Activated CD4-positive, alpha-beta T cell treated with anti-CD3 and anti-CD28 coated beads, Interleukin-2, amount 10 ng/mL, durations not matched to agents 7 days and 5 days (primary cell): ENCODE measurements at regions of chr12 and their contacts with region 1.

Region 1: GRCh38 chr12:56346703-56347102 is 8.0 kb downstream of the IL23A start:
- DNase-seq: no peak
- H3K4me3 Mint-ChIP-seq: no peak overlapping the region
- H3K27ac Mint-ChIP-seq: no peak overlapping the region
- H3K4me1 Mint-ChIP-seq: peaks cover 5% of the 10 kb centered on the region
- H3K27me3 Mint-ChIP-seq: no peaks in the 10 kb centered on the region

Region 2: GRCh38 chr12:54840317-54840771 is 1506.4 kb before region 1 on chr12:
- CTCF ChIA-PET with region 1: no interaction called
- POLR2A ChIA-PET with region 1: interaction called, 13 read pairs
- DNase-seq: no peak
- H3K4me3 Mint-ChIP-seq: no peak overlapping the region
- H3K27ac Mint-ChIP-seq: no peak overlapping the region
- H3K4me1 Mint-ChIP-seq: peaks cover 2% of the 10 kb centered on the region
- H3K27me3 Mint-ChIP-seq: peaks cover 26% of the 10 kb centered on the region

Region 3: GRCh38 chr12:56280849-56281248 is 65.9 kb before region 1 on chr12:
- CTCF ChIA-PET with region 1: no interaction called
- POLR2A ChIA-PET with region 1: no interaction called
- DNase-seq: no peak
- H3K4me3 Mint-ChIP-seq: no peak overlapping the region
- H3K27ac Mint-ChIP-seq: no peak overlapping the region
- H3K4me1 Mint-ChIP-seq: no peaks in the 10 kb centered on the region
- H3K27me3 Mint-ChIP-seq: no peaks in the 10 kb centered on the region

Region 4: GRCh38 chr12:56333679-56334489 is 12.8 kb before region 1 on chr12 and contains the start of gene PAN2:
- CTCF ChIA-PET with region 1: interaction called, 15 read pairs
- POLR2A ChIA-PET with region 1: interaction called, 3 read pairs
- DNase-seq: peak; percentile 95
- H3K4me3 Mint-ChIP-seq: peak within 1 kb of the TSS; percentile 88
- H3K27ac Mint-ChIP-seq: peak within 1 kb of the TSS; percentile 97
- H3K4me1 Mint-ChIP-seq: peaks cover 49% of the 10 kb centered on the region
- H3K27me3 Mint-ChIP-seq: no peaks in the 10 kb centered on the region
- total RNA-seq, gene PAN2: 76.9 to 78.9 TPM

Region 5: GRCh38 chr12:56359851-56360767 is 13.4 kb after region 1 on chr12 and contains the start of gene STAT2:
- CTCF ChIA-PET with region 1: interaction called, 26 read pairs
- POLR2A ChIA-PET with region 1: interaction called, 3 read pairs
- DNase-seq: peak; percentile 100
- H3K4me3 Mint-ChIP-seq: peak within 1 kb of the TSS; percentile 91
- H3K27ac Mint-ChIP-seq: peak within 1 kb of the TSS; percentile 99
- H3K4me1 Mint-ChIP-seq: peaks cover 32% of the 10 kb centered on the region
- H3K27me3 Mint-ChIP-seq: no peaks in the 10 kb centered on the region
- total RNA-seq, gene STAT2: 391 to 398 TPM

Region 6: DNA sequence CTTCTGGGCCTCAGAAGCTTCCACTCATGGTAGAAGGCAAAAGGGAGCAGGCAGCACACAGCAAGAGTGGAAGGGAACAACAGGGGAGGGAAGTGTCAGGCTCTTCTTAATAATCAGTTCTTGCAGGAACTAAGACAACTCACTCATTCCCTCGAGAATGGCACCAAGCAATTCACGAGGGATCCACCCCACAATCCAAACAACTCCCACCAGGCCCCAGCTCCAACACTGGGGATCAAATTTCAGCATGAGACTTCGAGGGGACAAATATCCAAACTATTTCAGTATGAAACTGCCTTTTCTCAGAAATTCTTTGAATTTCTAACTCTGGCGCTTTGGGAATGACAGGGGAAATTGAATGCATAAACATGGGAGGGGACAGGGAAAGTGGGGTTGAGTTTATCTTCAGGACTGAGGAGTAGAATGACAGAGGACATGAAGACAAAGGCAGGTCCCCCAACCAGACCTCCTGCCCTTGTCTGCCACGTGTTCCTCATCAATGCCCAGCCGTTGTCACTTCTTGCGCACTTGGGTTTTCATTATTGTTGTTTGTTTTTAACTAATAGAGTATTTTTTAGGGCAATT is 40.5 kb after region 1 on chr12:
- CTCF ChIA-PET with region 1: no interaction called
- POLR2A ChIA-PET with region 1: no interaction called
- DNase-seq: no peak
- H3K4me3 Mint-ChIP-seq: no peak overlapping the region
- H3K27ac Mint-ChIP-seq: no peak overlapping the region
- H3K4me1 Mint-ChIP-seq: no peaks in the 10 kb centered on the region
- H3K27me3 Mint-ChIP-seq: no peaks in the 10 kb centered on the region